ENCODE measurements at regions of chr15 and their contacts with region 1.

Region 1: DNA sequence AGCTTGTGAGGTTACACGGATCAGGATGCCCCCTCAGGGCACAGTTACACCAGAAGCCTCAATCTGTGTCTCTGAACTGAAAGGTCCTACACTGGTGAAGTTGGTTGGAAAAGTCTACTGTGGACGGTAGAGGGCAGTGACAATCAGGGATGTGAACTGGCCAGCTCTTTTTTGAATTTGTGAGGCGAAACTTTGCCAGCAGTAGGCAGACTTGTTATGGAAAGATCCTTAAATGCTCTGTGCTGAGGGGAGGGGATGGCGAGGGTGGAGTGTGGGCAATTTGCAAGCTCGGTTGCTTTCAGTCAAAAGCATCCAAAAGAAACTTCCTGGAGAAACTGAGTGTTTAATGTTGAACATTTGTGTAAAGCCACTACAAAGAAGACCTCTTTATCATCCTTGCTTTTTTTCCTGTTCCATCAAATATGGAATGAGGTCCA is 127.4 kb upstream of the ABHD17C start:
- DNase-seq: peak; percentile 73
- H3K4me3 ChIP-seq: no peak overlapping the region
- H3K27ac ChIP-seq: no peak overlapping the region
- H3K27me3 ChIP-seq: no peaks in the 10 kb centered on the region
- CTCF ChIP-seq: peak; percentile 95

Region 2: GRCh38 chr15:80121546-80121945 is 446.2 kb before region 1 on chr15:
- CTCF ChIA-PET with region 1: no interaction called
- POLR2A ChIA-PET with region 1: no interaction called
- DNase-seq: no peak
- H3K4me3 ChIP-seq: no peak overlapping the region
- H3K27ac ChIP-seq: no peak overlapping the region
- H3K27me3 ChIP-seq: no peaks in the 10 kb centered on the region
- CTCF ChIP-seq: no peak

Region 3: GRCh38 chr15:80404057-80404715 is 163.6 kb before region 1 on chr15 and contains the start of gene ARNT2:
- CTCF ChIA-PET with region 1: no interaction called
- POLR2A ChIA-PET with region 1: no interaction called
- DNase-seq: no peak
- H3K4me3 ChIP-seq: peak within 1 kb of the TSS; percentile 69
- H3K27ac ChIP-seq: peak within 1 kb of the TSS; percentile 21
- H3K27me3 ChIP-seq: no peaks in the 10 kb centered on the region
- CTCF ChIP-seq: no peak
- polyA plus RNA-seq, gene ARNT2: 36.8 and 42.8 TPM in 2 replicates

Region 4: DNA sequence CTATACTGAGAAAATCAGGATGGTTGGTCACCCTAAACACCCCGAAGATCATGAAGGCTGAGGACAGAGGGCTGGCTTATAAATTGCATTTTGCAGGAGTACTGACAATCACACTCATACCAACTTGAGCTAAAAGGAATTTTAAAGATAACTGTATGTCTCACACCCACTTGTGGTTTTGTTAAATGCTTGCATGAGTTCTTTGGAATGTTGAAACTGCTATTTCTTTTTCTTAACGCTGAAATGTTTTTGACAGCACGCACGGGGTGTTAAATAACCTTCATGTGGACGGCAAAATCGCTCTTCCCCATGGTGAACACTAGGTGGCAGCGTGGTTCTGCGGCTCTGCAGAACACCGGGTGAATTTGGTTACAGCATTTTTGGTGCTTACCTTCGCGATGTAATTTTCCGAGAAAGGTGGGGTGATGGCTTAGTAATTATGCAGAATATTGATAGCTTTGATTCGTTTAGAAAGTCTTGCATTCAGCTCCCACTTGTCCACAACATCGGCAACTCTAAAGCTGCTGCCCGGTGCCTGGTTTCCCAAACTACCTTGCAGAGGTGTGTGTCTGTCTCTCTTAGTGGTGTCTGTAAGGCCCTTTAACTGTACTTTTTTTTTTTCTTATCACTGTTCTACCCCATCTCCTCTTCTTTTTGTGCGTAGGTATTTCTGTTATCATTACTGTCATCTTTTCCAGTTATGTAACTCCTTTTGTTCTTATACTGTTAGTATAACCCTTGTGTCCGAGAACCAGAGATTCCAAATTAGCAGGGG is 111.9 kb before region 1 on chr15:
- CTCF ChIA-PET with region 1: interaction called, 74 read pairs
- POLR2A ChIA-PET with region 1: no interaction called
- DNase-seq: peak; percentile 93
- H3K4me3 ChIP-seq: peak overlapping the region; percentile 17; the same call in 1 of the 2 replicates
- H3K27ac ChIP-seq: peak overlapping the region; percentile 87
- H3K27me3 ChIP-seq: no peaks in the 10 kb centered on the region
- CTCF ChIP-seq: peak; percentile 97

Region 5: GRCh38 chr15:80550219-80550907 is 17.4 kb before region 1 on chr15:
- CTCF ChIA-PET with region 1: interaction called, 47 read pairs
- POLR2A ChIA-PET with region 1: no interaction called
- DNase-seq: peak; percentile 88
- H3K4me3 ChIP-seq: no peak overlapping the region
- H3K27ac ChIP-seq: peak overlapping the region; percentile 96
- H3K27me3 ChIP-seq: no peaks in the 10 kb centered on the region
- CTCF ChIP-seq: no peak

Region 6: GRCh38 chr15:80611543-80612080 is 43.9 kb after region 1 on chr15:
- CTCF ChIA-PET with region 1: no interaction called
- POLR2A ChIA-PET with region 1: no interaction called
- DNase-seq: no peak
- H3K4me3 ChIP-seq: no peak overlapping the region
- H3K27ac ChIP-seq: no peak overlapping the region
- H3K27me3 ChIP-seq: no peaks in the 10 kb centered on the region
- CTCF ChIP-seq: no peak

Region 7: GRCh38 chr15:80760960-80761359 is 193.2 kb after region 1 on chr15:
- CTCF ChIA-PET with region 1: interaction called, 10 read pairs
- POLR2A ChIA-PET with region 1: no interaction called
- DNase-seq: no peak
- H3K4me3 ChIP-seq: no peak overlapping the region
- H3K27ac ChIP-seq: no peak overlapping the region
- H3K27me3 ChIP-seq: no peaks in the 10 kb centered on the region
- CTCF ChIP-seq: no peak

Region 8: GRCh38 chr15:80970018-80970658 is 402.4 kb after region 1 on chr15:
- CTCF ChIA-PET with region 1: interaction called, 24 read pairs
- POLR2A ChIA-PET with region 1: no interaction called
- DNase-seq: no peak
- H3K4me3 ChIP-seq: no peak overlapping the region
- H3K27ac ChIP-seq: no peak overlapping the region
- H3K27me3 ChIP-seq: no peaks in the 10 kb centered on the region
- CTCF ChIP-seq: peak; percentile 79

Measured in AG04450 (cell line).